Activated CD4-positive, alpha-beta T cell treated with anti-CD3 and anti-CD28 coated beads, Interleukin-2, amount 10 ng/mL, durations not matched to agents 24 days and 14 days (primary cell): ENCODE measurements at regions of chr13 and their contacts with region 1.

Region 1: GRCh38 chr13:40777166-40777808 is 6.3 kb upstream of the MRPS31 start:
- DNase-seq: peak; percentile 84
- H3K4me3 Mint-ChIP-seq: peak overlapping the region; percentile 77
- H3K27ac Mint-ChIP-seq: peak overlapping the region; percentile 99
- H3K4me1 Mint-ChIP-seq: peaks cover 33% of the 10 kb centered on the region
- H3K27me3 Mint-ChIP-seq: no peaks in the 10 kb centered on the region

Region 2: GRCh38 chr13:39095500-39095899 is 1681.8 kb before region 1 on chr13:
- intact Hi-C with region 1: loop called (anchors 5 kb)
- DNase-seq: peak; percentile 57
- H3K4me3 Mint-ChIP-seq: peak overlapping the region; percentile 46
- H3K27ac Mint-ChIP-seq: peak overlapping the region; percentile 96
- H3K4me1 Mint-ChIP-seq: peaks cover 32% of the 10 kb centered on the region
- H3K27me3 Mint-ChIP-seq: no peaks in the 10 kb centered on the region

Region 3: GRCh38 chr13:39942552-39943273 is 834.6 kb before region 1 on chr13:
- intact Hi-C with region 1: loop called (anchors 5 kb)
- DNase-seq: peak; percentile 91
- H3K4me3 Mint-ChIP-seq: no peak overlapping the region
- H3K27ac Mint-ChIP-seq: no peak overlapping the region
- H3K4me1 Mint-ChIP-seq: peaks cover 13% of the 10 kb centered on the region
- H3K27me3 Mint-ChIP-seq: peaks cover 3% of the 10 kb centered on the region

Region 4: DNA sequence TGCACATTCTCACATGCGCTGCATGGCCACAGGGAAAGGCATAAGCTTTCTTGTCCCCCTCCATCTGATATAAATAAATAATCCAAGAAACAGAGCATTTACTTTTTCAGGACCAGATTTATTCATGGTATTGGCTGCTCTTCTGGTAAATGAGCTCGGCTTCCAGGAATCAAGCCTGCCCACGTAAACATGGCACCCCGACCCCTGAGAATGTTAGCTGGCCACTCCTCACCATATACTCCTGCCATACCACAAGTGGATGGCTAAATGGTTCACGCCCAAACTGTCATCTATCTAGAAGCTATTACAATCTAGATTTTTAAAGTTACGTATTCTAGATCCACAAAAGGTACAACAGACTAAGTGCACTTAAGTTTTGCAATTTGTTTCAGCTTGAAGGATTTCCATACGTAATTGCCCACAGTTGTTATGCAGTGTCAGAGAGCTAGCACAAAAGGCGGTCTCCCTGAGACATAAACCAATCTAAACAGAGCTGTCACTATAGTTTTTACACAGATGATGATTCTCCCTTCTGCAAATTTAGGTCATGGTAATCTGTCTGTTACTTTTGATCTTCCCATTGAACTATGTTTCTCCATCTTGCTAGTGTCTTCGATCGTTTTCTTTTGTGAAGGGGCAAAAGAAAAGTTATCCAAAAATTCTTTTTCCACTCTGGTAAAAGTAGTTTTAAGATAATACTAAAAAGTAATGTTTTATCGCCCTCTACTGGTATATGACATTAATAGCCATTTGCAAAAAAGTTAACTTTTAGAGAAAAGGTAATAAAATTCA is 94.6 kb before region 1 on chr13:
- intact Hi-C with region 1: loop called (anchors 5 kb)
- DNase-seq: no peak
- H3K4me3 Mint-ChIP-seq: no peak overlapping the region
- H3K27ac Mint-ChIP-seq: no peak overlapping the region
- H3K4me1 Mint-ChIP-seq: peaks cover 13% of the 10 kb centered on the region
- H3K27me3 Mint-ChIP-seq: no peaks in the 10 kb centered on the region

Region 5: DNA sequence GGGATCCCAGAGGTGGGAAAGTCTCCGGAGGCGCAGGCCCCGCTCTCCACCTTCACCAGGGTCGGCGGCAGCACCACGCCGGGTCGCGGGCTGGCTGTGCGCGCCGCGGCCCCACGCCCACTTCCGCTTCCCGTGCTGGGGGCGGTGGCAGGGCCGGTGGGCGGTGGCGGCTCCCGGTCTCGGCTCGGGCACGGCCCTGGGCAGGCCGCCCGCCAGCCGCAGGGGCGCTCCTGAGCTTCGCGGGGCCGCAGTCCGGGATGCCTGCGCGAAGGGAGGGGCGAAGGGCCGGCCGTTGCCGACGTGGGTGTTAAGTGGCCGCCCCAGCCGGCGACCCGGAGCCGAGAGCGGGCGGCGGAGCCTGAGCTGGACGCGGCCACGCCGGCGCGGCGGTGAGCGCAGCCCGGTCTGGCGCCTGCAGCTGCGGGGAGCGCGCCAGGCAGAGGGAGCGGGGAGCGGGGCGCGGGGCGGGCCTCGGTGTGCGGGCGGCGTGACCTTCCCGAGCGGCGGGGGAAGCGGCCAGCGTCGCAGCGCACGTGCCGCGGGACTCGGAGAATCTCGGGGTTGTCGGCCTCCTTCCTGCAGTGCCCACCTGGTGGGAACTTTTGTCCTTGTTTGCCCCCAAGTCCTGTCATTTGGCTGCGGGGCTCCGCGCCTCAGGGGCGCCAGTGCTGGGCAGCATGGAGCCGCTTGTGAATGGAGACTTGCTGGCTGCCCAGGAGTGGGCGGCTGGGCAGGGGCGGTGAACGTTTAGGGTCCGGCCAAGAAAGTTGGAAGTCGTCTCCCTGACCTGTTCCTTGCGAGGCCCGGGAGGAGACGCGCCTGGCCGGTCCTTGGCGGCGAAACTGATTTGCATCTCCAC is 12.2 kb after region 1 on chr13 and contains the start of gene SLC25A15:
- intact Hi-C with region 1: loop called (anchors 1 kb)
- DNase-seq: peak; percentile 94
- H3K4me3 Mint-ChIP-seq: peak within 1 kb of the TSS; percentile 79
- H3K27ac Mint-ChIP-seq: peak within 1 kb of the TSS; percentile 80
- H3K4me1 Mint-ChIP-seq: peaks cover 21% of the 10 kb centered on the region
- H3K27me3 Mint-ChIP-seq: no peaks in the 10 kb centered on the region
- total RNA-seq, gene SLC25A15: 22.8 and 24.2 TPM in 2 replicates

Region 6: GRCh38 chr13:41004875-41005693 is 227.8 kb after region 1 on chr13:
- intact Hi-C with region 1: loop called (anchors 5 kb)
- DNase-seq: peak; percentile 82
- H3K4me3 Mint-ChIP-seq: peak overlapping the region; percentile 74
- H3K27ac Mint-ChIP-seq: peak overlapping the region; percentile 84
- H3K4me1 Mint-ChIP-seq: peaks cover 54% of the 10 kb centered on the region
- H3K27me3 Mint-ChIP-seq: no peaks in the 10 kb centered on the region